ENCODE measurements at regions of chr1 and their contacts with region 1.

Region 1: GRCh38 chr1:7752512-7753417 is 18.3 kb upstream of the VAMP3 start:
- DNase-seq: peak; percentile 80
- H3K4me3 ChIP-seq: peak overlapping the region in 1 of 2 donors; percentile 10
- H3K27ac ChIP-seq: peak overlapping the region in 1 of 2 donors; percentile 11
- H3K4me1 ChIP-seq: no peaks in the 10 kb centered on the region
- H3K27me3 ChIP-seq: no peaks in the 10 kb centered on the region
- CTCF ChIP-seq: peak; percentile 63 to 93 (median 82)
- POLR2A ChIP-seq: no peak

Region 2: GRCh38 chr1:7667625-7668218 is 85.0 kb before region 1 on chr1:
- intact Hi-C with region 1: loop called (anchors 2 kb)
- DNase-seq: peak; percentile 92
- H3K4me3 ChIP-seq: no peak overlapping the region
- H3K27ac ChIP-seq: no peak overlapping the region
- H3K4me1 ChIP-seq: no peaks in the 10 kb centered on the region
- H3K27me3 ChIP-seq: no peaks in the 10 kb centered on the region
- CTCF ChIP-seq: peak; percentile 99 to 100 (median 100)
- POLR2A ChIP-seq: no peak

Region 3: GRCh38 chr1:8015036-8015808 is 262.5 kb after region 1 on chr1:
- intact Hi-C with region 1: no loop called
- DNase-seq: peak; percentile 70
- H3K4me3 ChIP-seq: peak overlapping the region in 1 of 2 donors; percentile 6
- H3K27ac ChIP-seq: peak overlapping the region; percentile 63 to 94
- H3K4me1 ChIP-seq: peaks cover 28% of the 10 kb centered on the region
- H3K27me3 ChIP-seq: no peaks in the 10 kb centered on the region
- CTCF ChIP-seq: peak; percentile 63 to 88 (median 80)
- POLR2A ChIP-seq: no peak